ENCODE measurements at regions of chr12 and their contacts with region 1.

Region 1: GRCh38 chr12:14167005-14167628 is 185.7 kb upstream of the GRIN2B start:
- DNase-seq: peak in 2 of 5 donors; percentile 28 to 29
- H3K4me3 ChIP-seq: no peak overlapping the region
- H3K27ac ChIP-seq: no peak overlapping the region
- H3K4me1 ChIP-seq: no peaks in the 10 kb centered on the region
- H3K27me3 ChIP-seq: no peaks in the 10 kb centered on the region
- CTCF ChIP-seq: peak; percentile 33 to 59 (median 36)
- EP300 ChIP-seq: no peak
- POLR2A ChIP-seq: no peak

Region 2: GRCh38 chr12:13278249-13278787 is 888.8 kb before region 1 on chr12:
- intact Hi-C with region 1: loop called in 2 of 4 experiments (anchors 5 to 10 kb)
- DNase-seq: peak; percentile 64 to 84 (median 77)
- H3K4me3 ChIP-seq: no peak overlapping the region
- H3K27ac ChIP-seq: no peak overlapping the region
- H3K4me1 ChIP-seq: peaks cover 2% of the 10 kb centered on the region
- H3K27me3 ChIP-seq: no peaks in the 10 kb centered on the region
- CTCF ChIP-seq: peak; percentile 64 to 97 (median 83)
- EP300 ChIP-seq: no peak
- POLR2A ChIP-seq: no peak

Region 3: DNA sequence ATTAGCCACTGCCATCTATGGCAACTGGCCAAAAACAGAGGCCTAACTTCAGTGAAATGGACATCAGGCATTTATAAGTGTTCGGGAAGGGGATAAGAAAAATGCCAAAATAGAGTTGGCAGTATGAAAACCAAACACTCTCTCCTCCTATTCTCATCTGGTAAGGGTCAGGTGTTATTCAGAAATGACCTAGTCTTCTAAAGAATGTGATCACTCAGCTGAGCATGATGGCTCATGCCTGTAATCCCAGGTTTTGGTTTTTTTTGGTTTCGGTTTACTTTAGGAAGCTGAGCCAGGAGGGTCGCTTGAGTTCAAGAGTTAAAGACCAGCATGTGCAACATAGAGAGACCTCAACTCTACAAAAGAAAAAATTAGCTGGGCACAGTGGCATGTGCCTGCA is 356.1 kb before region 1 on chr12:
- intact Hi-C with region 1: no loop called
- DNase-seq: no peak
- H3K4me3 ChIP-seq: no peak overlapping the region
- H3K27ac ChIP-seq: no peak overlapping the region
- H3K4me1 ChIP-seq: no peaks in the 10 kb centered on the region
- H3K27me3 ChIP-seq: no peaks in the 10 kb centered on the region
- CTCF ChIP-seq: no peak
- EP300 ChIP-seq: no peak
- POLR2A ChIP-seq: no peak

Region 4: GRCh38 chr12:13864081-13864673 is 302.9 kb before region 1 on chr12:
- intact Hi-C with region 1: loop called in 1 of 4 experiments (anchors 10 kb)
- DNase-seq: peak in 4 of 5 donors; percentile 24 to 59 (median 45)
- H3K4me3 ChIP-seq: no peak overlapping the region
- H3K27ac ChIP-seq: no peak overlapping the region
- H3K4me1 ChIP-seq: no peaks in the 10 kb centered on the region
- H3K27me3 ChIP-seq: no peaks in the 10 kb centered on the region
- CTCF ChIP-seq: no peak
- EP300 ChIP-seq: no peak
- POLR2A ChIP-seq: no peak

Region 5: GRCh38 chr12:14193639-14194038 is 26.5 kb after region 1 on chr12:
- intact Hi-C with region 1: no loop called
- DNase-seq: no peak
- H3K4me3 ChIP-seq: no peak overlapping the region
- H3K27ac ChIP-seq: no peak overlapping the region
- H3K4me1 ChIP-seq: no peaks in the 10 kb centered on the region
- H3K27me3 ChIP-seq: no peaks in the 10 kb centered on the region
- CTCF ChIP-seq: no peak
- EP300 ChIP-seq: no peak
- POLR2A ChIP-seq: no peak

Region 6: GRCh38 chr12:14505626-14506596 is 338.8 kb after region 1 on chr12:
- intact Hi-C with region 1: no loop called
- DNase-seq: no peak
- H3K4me3 ChIP-seq: no peak overlapping the region
- H3K27ac ChIP-seq: no peak overlapping the region
- H3K4me1 ChIP-seq: no peaks in the 10 kb centered on the region
- H3K27me3 ChIP-seq: no peaks in the 10 kb centered on the region
- CTCF ChIP-seq: no peak
- EP300 ChIP-seq: no peak
- POLR2A ChIP-seq: no peak

Measured in ovary (tissue), 10 donors.